ENCODE measurements at regions of chr5 and their contacts with region 1.

Region 1: GRCh38 chr5:143106174-143106573 is 297.3 kb downstream of the NR3C1 start:
- DNase-seq: no peak
- CTCF ChIP-seq: no peak

Region 2: DNA sequence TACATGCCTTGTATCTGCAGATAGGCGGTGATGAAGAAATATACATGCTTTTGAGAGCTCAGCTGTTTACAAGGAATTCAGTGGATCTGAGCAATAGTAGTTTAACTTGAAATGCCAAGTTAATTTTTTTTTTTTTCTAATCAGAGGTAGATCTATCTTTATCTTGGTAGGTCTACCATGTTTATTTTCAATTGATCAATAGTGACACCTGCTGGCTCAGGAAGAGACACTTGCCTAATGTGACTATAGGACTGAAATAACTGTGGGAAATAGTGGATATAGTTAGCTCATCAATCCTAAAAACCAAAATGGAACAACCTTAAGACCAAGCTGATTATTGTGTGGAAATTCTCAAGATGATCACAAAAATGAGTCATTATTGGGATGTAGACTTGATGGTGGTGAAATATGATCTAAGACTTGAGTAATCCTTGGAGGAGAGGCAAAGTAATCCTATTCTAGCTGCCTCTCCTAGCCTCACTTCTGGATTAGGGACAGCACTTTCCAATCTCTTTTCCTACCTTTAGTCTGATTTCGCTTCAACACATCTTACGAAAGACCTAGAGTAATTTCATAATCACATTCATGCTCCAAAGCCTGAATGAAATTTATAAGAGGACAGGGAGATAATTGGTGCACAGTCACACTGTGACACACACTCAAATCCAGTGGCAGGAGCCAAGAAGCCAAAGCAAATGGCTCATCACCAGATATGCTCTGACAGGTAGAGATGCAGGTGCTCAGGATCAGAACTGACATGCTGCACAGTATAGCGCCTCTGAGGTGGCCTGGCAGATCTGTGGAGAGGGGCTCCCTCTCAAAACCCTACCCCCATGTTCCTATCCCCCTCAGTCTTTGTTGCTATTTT is 862.1 kb after region 1 on chr5:
- in situ Hi-C with region 1: loop called (anchors 25 kb)
- DNase-seq: peak; percentile 34
- CTCF ChIP-seq: peak; percentile 58

Measured in GM13977 (cell line).